CD14-positive monocyte (primary cell): ENCODE measurements at regions of chr6 and their contacts with region 1.

Region 1: GRCh38 chr6:127464881-127465459 is 5.8 kb upstream of the KIAA0408 start:
- DNase-seq: peak; percentile 47 to 66 (median 63)
- H3K4me3 ChIP-seq: no peak overlapping the region
- H3K4me3 Mint-ChIP-seq: no peak overlapping the region
- H3K27ac ChIP-seq: no peak overlapping the region
- H3K27ac Mint-ChIP-seq: no peak overlapping the region
- H3K4me1 ChIP-seq: no peaks in the 10 kb centered on the region
- H3K4me1 Mint-ChIP-seq: no peaks in the 10 kb centered on the region
- H3K27me3 ChIP-seq: no peaks in the 10 kb centered on the region
- H3K27me3 Mint-ChIP-seq: peaks cover 0 to 2% (median 0%) of the 10 kb centered on the region in 3 donors
- CTCF ChIP-seq: peak; percentile 86

Region 2: GRCh38 chr6:127547215-127547614 is 82.2 kb after region 1 on chr6:
- intact Hi-C with region 1: loop called in 1 of 2 experiments (anchors 10 kb)
- DNase-seq: peak in 2 of 3 donors; percentile 10 to 16
- H3K4me3 ChIP-seq: no peak overlapping the region
- H3K4me3 Mint-ChIP-seq: no peak overlapping the region
- H3K27ac ChIP-seq: no peak overlapping the region
- H3K27ac Mint-ChIP-seq: no peak overlapping the region
- H3K4me1 ChIP-seq: no peaks in the 10 kb centered on the region
- H3K4me1 Mint-ChIP-seq: no peaks in the 10 kb centered on the region
- H3K27me3 ChIP-seq: peaks cover 0 to 9% of the 10 kb centered on the region in 2 donors
- H3K27me3 Mint-ChIP-seq: peaks cover 5 to 23% (median 15%) of the 10 kb centered on the region in 3 donors
- CTCF ChIP-seq: peak; percentile 40

Region 3: GRCh38 chr6:127967708-127968107 is 502.7 kb after region 1 on chr6:
- intact Hi-C with region 1: no loop called
- DNase-seq: no peak
- H3K4me3 ChIP-seq: no peak overlapping the region
- H3K4me3 Mint-ChIP-seq: no peak overlapping the region
- H3K27ac ChIP-seq: no peak overlapping the region
- H3K27ac Mint-ChIP-seq: no peak overlapping the region
- H3K4me1 ChIP-seq: no peaks in the 10 kb centered on the region
- H3K4me1 Mint-ChIP-seq: no peaks in the 10 kb centered on the region
- H3K27me3 ChIP-seq: no peaks in the 10 kb centered on the region
- H3K27me3 Mint-ChIP-seq: peaks cover 0 to under 1% (median 0%) of the 10 kb centered on the region in 3 donors
- CTCF ChIP-seq: no peak